CD8-positive, alpha-beta T cell (primary cell): ENCODE measurements at regions of chr13 and their contacts with region 1.

Region 1: GRCh38 chr13:45047394-45048310 is 58.3 kb downstream of the GPALPP1 start:
- DNase-seq: peak; percentile 56 to 85 (median 76)
- ATAC-seq: peak; percentile 97
- H3K4me3 ChIP-seq: peak overlapping the region in 1 of 2 experiments; percentile 31
- H3K4me3 Mint-ChIP-seq: peak overlapping the region; percentile 54
- H3K27ac ChIP-seq: no peak overlapping the region
- H3K27ac Mint-ChIP-seq: no peak overlapping the region
- H3K4me1 ChIP-seq: no peaks in the 10 kb centered on the region
- H3K4me1 Mint-ChIP-seq: peaks cover 7% of the 10 kb centered on the region
- H3K27me3 ChIP-seq: peaks cover 0 to 5% of the 10 kb centered on the region in 2 experiments
- H3K27me3 Mint-ChIP-seq: peaks cover 10% of the 10 kb centered on the region
- CTCF ChIP-seq: peak; percentile 81

Region 2: DNA sequence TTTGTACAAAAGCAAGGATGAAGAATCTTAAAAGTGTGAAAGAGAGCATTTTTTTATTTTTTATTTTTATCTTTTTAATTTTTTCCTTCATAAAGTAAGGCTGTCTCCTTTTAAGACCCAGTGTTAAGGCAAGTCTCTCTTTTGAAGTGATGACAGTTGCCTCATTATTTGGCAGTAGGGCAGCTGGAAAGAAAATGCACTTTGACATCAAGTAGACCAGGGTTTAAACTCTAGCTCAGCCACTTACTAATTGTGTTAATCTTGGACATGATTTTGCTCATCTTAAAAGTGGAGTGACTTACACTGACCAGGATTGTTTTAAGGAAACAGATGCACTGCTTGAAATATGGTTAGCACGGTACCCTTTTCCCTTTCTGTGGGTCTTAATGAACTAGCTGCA is 39.8 kb before region 1 on chr13:
- CTCF ChIA-PET with region 1: no interaction called
- POLR2A ChIA-PET with region 1: no interaction called
- intact Hi-C with region 1: no loop called
- DNase-seq: no peak
- ATAC-seq: no peak
- H3K4me3 ChIP-seq: no peak overlapping the region
- H3K4me3 Mint-ChIP-seq: no peak overlapping the region
- H3K27ac ChIP-seq: no peak overlapping the region
- H3K27ac Mint-ChIP-seq: no peak overlapping the region
- H3K4me1 ChIP-seq: no peaks in the 10 kb centered on the region
- H3K4me1 Mint-ChIP-seq: no peaks in the 10 kb centered on the region
- H3K27me3 ChIP-seq: no peaks in the 10 kb centered on the region
- H3K27me3 Mint-ChIP-seq: no peaks in the 10 kb centered on the region
- CTCF ChIP-seq: no peak

Region 3: DNA sequence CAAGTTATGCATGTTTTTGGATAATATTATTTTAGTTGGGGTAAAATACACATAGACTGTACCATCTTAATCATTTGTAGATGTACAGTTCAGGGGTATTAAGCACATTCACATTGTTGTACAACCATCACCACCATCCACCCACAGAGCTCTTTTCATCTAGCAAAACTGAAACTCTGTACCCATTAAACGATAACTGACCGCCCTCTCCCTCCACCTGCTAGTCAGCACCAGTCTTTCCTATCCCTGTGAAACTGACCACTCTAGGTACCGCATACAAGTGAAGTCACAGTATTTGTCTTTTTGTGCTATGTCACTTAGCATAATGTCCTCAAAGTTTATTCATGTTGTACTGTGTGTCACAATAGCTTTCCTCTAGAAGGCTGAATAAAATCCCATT is 12.4 kb after region 1 on chr13:
- CTCF ChIA-PET with region 1: interaction called, 19 read pairs
- POLR2A ChIA-PET with region 1: no interaction called
- intact Hi-C with region 1: no loop called
- DNase-seq: no peak
- ATAC-seq: no peak
- H3K4me3 ChIP-seq: no peak overlapping the region
- H3K4me3 Mint-ChIP-seq: no peak overlapping the region
- H3K27ac ChIP-seq: no peak overlapping the region
- H3K27ac Mint-ChIP-seq: no peak overlapping the region
- H3K4me1 ChIP-seq: no peaks in the 10 kb centered on the region
- H3K4me1 Mint-ChIP-seq: peaks cover 4% of the 10 kb centered on the region
- H3K27me3 ChIP-seq: peaks cover 0 to 2% of the 10 kb centered on the region in 2 experiments
- H3K27me3 Mint-ChIP-seq: peaks cover 16% of the 10 kb centered on the region
- CTCF ChIP-seq: no peak

Region 4: GRCh38 chr13:45280751-45281634 is 233.3 kb after region 1 on chr13:
- CTCF ChIA-PET with region 1: interaction called, 27 read pairs
- POLR2A ChIA-PET with region 1: no interaction called
- intact Hi-C with region 1: loop called in 1 of 2 experiments (anchors 1 kb)
- DNase-seq: peak in 8 of 9 experiments; percentile 4 to 52 (median 23)
- ATAC-seq: peak; percentile 69
- H3K4me3 ChIP-seq: no peak overlapping the region
- H3K4me3 Mint-ChIP-seq: no peak overlapping the region
- H3K27ac ChIP-seq: no peak overlapping the region
- H3K27ac Mint-ChIP-seq: no peak overlapping the region
- H3K4me1 ChIP-seq: no peaks in the 10 kb centered on the region
- H3K4me1 Mint-ChIP-seq: no peaks in the 10 kb centered on the region
- H3K27me3 ChIP-seq: no peaks in the 10 kb centered on the region
- H3K27me3 Mint-ChIP-seq: no peaks in the 10 kb centered on the region
- CTCF ChIP-seq: peak; percentile 24

Region 5: DNA sequence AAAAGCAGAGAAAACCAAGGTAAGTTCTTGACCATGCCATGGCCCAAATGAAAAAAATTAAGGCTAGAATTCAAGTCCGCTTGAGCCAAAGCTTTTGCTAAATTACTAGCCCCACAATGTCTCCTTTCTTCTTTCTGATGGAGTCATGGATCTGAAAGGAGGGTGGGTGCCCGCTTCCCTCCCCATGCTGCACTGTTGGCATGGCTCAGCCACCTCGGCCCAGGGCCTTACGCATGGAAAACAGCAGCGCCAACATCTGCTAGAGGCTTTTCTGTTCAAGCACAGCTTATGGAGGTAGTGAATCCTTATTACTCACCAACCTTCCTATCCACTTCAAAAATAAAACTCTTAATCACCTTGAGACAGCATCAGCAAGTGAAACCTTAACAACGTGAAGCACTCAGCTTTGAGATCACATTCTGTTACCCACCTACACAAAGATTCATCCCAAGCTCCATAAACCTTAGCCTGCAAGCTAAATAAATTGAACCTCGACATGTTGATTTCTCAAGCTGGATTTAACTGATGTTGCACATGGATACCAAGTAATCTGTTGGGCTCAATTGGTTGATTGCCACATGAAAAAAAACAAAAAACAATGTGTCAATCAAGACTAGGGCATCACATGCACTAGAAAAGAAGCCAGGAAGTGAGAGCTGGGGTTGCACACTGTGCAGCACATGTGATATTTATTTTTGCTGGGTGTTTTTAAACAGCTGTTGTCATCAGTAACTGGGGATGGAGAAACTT is 250.0 kb after region 1 on chr13:
- CTCF ChIA-PET with region 1: interaction called, 17 read pairs
- POLR2A ChIA-PET with region 1: interaction called, 3 read pairs
- intact Hi-C with region 1: no loop called
- DNase-seq: peak in 3 of 9 experiments; percentile 13 to 60 (median 32)
- ATAC-seq: peak; percentile 81
- H3K4me3 ChIP-seq: no peak overlapping the region
- H3K4me3 Mint-ChIP-seq: peak overlapping the region; percentile 9
- H3K27ac ChIP-seq: peak overlapping the region in 1 of 2 experiments; percentile 55
- H3K27ac Mint-ChIP-seq: peak overlapping the region; percentile 81
- H3K4me1 ChIP-seq: peaks cover 29% of the 10 kb centered on the region
- H3K4me1 Mint-ChIP-seq: peaks cover 41% of the 10 kb centered on the region
- H3K27me3 ChIP-seq: no peaks in the 10 kb centered on the region
- H3K27me3 Mint-ChIP-seq: no peaks in the 10 kb centered on the region
- CTCF ChIP-seq: no peak

Region 6: DNA sequence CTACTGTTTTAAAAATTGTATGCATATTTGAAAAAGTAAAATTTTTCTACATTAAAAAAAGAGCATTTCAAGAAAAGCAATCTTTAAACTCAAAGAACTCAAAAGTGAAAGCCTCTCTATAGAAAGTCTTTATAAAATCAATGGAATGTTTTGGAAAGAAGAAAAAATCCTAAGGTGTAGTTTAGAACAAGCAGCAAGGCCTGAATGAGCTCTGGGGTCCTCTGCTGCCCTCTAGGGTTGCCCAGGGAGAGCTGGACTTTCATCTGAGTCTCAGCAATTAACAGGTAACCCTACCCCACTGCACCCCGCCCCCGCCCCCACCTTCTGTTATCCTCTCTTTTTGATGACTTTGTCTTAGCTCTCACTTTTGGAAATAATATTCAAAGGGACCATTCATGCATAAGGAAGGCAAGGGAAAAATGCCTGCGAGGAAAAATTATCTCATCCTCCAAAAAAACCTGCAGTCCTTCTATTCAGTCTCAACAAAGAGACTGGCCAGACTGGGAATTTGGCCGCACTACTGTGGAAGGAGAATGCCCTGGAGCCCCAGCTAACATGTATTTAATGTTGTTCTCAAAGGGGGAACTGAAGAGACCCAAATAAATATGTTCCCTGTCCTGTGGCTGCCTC is 346.4 kb after region 1 on chr13:
- CTCF ChIA-PET with region 1: interaction called, 8 read pairs
- POLR2A ChIA-PET with region 1: no interaction called
- intact Hi-C with region 1: loop called (anchors 1 to 5 kb)
- DNase-seq: peak in 4 of 9 experiments; percentile 31 to 69 (median 48)
- ATAC-seq: no peak
- H3K4me3 ChIP-seq: no peak overlapping the region
- H3K4me3 Mint-ChIP-seq: no peak overlapping the region
- H3K27ac ChIP-seq: no peak overlapping the region
- H3K27ac Mint-ChIP-seq: no peak overlapping the region
- H3K4me1 ChIP-seq: peaks cover 43% of the 10 kb centered on the region
- H3K4me1 Mint-ChIP-seq: peaks cover 46% of the 10 kb centered on the region
- H3K27me3 ChIP-seq: no peaks in the 10 kb centered on the region
- H3K27me3 Mint-ChIP-seq: no peaks in the 10 kb centered on the region
- CTCF ChIP-seq: peak; percentile 38

Region 7: GRCh38 chr13:45490068-45490467 is 442.4 kb after region 1 on chr13:
- CTCF ChIA-PET with region 1: no interaction called
- POLR2A ChIA-PET with region 1: no interaction called
- intact Hi-C with region 1: loop called (anchors 1 kb)
- DNase-seq: peak in 4 of 9 experiments; percentile 19 to 62 (median 42)
- ATAC-seq: peak; percentile 93
- H3K4me3 ChIP-seq: no peak overlapping the region
- H3K4me3 Mint-ChIP-seq: no peak overlapping the region
- H3K27ac ChIP-seq: no peak overlapping the region
- H3K27ac Mint-ChIP-seq: no peak overlapping the region
- H3K4me1 ChIP-seq: no peaks in the 10 kb centered on the region
- H3K4me1 Mint-ChIP-seq: no peaks in the 10 kb centered on the region
- H3K27me3 ChIP-seq: no peaks in the 10 kb centered on the region
- H3K27me3 Mint-ChIP-seq: no peaks in the 10 kb centered on the region
- CTCF ChIP-seq: peak; percentile 65

Region 8: GRCh38 chr13:45511310-45512097 is 463.9 kb after region 1 on chr13:
- CTCF ChIA-PET with region 1: interaction called, 5 read pairs
- POLR2A ChIA-PET with region 1: no interaction called
- intact Hi-C with region 1: loop called (anchors 1 to 5 kb)
- DNase-seq: peak in 5 of 9 experiments; percentile 20 to 80 (median 26)
- ATAC-seq: peak; percentile 95
- H3K4me3 ChIP-seq: no peak overlapping the region
- H3K4me3 Mint-ChIP-seq: no peak overlapping the region
- H3K27ac ChIP-seq: no peak overlapping the region
- H3K27ac Mint-ChIP-seq: peak overlapping the region; percentile 52
- H3K4me1 ChIP-seq: no peaks in the 10 kb centered on the region
- H3K4me1 Mint-ChIP-seq: peaks cover 8% of the 10 kb centered on the region
- H3K27me3 ChIP-seq: no peaks in the 10 kb centered on the region
- H3K27me3 Mint-ChIP-seq: no peaks in the 10 kb centered on the region
- CTCF ChIP-seq: peak; percentile 85